ENCODE measurements at regions of chr6 and their contacts with region 1.

Region 1: DNA sequence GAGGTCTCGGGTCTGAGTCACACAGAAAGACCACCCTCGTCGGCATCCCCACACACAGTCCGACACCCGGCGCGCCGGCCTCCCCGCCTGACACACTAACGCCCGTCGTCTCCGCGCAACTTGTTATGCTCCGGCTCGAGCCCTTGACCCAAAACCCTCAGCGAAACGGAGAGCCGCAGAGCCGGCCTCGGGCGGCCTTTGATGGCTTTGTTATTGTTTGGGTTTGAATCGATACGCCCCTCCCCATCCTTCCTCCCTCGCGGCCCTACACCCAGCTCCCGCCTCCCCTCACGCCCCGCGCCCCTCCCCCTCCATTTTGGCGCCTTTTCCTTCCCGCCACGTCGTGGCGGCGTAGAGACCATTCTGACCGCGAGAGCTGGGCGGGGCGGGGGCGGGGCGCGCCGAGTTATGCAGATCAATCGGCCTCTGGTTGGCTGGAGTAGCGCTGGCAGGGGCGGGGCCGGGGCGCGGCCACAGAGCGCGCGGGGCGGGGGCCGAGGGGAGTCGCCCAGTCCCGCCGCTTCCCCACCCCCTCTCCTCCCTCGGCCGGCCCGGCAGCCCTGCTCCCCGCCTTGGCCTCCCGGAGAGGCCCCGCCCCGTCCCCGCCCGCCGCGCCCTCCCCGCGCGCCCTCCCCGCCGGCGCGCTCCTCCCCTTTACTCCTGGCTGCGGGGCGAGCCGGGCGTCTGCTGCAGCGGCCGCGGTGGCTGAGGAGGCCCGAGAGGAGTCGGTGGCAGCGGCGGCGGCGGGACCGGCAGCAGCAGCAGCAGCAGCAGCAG is at the start of gene PIM1:
- DNase-seq: peak; percentile 99 to 100 (median 100)
- ATAC-seq: peak; percentile 90 to 96 (median 92)
- H3K4me3 ChIP-seq: peak within 1 kb of the TSS; percentile 61 to 100 (median 90)
- H3K27ac ChIP-seq: peak within 1 kb of the TSS; percentile 88 to 97 (median 93)
- H3K4me1 ChIP-seq: peaks cover 0 to 42% (median 17%) of the 10 kb centered on the region in 12 donors
- H3K27me3 ChIP-seq: no peaks in the 10 kb centered on the region
- CTCF ChIP-seq: peak in 1 of 12 donors; percentile 25
- POLR2A ChIP-seq: peak; percentile 68 to 95
- total RNA-seq, gene PIM1: 7.0 to 81.8 (median 16.0) TPM

Region 2: GRCh38 chr6:36885461-36886401 is 284.0 kb before region 1 on chr6 and contains the start of gene C6orf89:
- intact Hi-C with region 1: loop called in 5 of 10 experiments (anchors 5 to 10 kb)
- DNase-seq: peak; percentile 97 to 99 (median 98)
- ATAC-seq: peak; percentile 99 to 100 (median 100)
- H3K4me3 ChIP-seq: peak within 1 kb of the TSS; percentile 52 to 93 (median 83)
- H3K27ac ChIP-seq: peak within 1 kb of the TSS; percentile 77 to 95 (median 88)
- H3K4me1 ChIP-seq: peaks cover 0 to 42% (median 26%) of the 10 kb centered on the region in 12 donors
- H3K27me3 ChIP-seq: no peaks in the 10 kb centered on the region
- CTCF ChIP-seq: peak; percentile 73 to 94 (median 87)
- POLR2A ChIP-seq: peak in 1 of 2 donors; percentile 75
- total RNA-seq, gene C6orf89: 54.2 to 86.2 (median 75.5) TPM

Region 3: DNA sequence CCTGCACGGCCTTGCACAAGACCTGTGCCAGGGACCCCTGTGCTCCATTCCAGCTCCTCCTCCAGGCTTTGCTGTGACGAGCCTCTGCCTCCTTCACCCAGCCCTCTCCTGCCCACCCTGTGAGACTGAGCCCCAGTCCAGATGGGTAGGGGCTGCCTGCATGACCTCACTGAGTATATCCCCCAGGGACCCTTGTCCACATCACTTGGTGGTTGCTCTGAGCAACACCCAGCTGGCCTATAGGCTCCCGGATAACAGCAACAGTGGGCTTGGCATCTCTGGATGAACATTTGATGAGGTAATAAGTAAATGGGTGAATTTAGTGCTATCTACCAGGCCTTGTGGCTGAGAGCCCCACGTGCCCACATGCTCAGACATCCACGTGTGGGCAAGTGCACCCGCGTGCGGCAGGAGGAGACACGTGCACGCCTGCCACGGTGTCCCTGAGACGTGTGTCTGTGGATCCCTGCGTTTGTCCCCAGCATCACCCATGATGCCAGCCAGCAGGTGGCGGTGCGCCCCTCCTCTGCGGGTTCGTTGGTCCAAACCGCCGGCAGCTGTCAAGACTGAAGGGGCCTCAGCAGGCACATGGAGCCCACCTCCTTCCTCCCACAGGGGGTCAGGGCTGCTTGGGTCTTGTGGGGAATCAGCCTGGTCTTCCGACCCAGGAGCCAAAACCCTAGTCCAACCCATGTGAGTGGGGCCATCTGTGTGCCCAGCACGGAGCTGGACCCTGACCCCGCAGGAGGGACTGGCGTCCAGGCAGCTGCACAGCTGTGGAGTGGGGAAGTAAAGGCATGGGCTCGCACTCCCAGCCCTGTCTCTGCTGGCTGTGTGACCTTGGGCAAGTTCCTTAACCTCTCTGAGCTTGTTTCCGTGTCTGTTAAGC is 118.3 kb before region 1 on chr6:
- intact Hi-C with region 1: loop called (anchors 1 to 2 kb)
- DNase-seq: peak; percentile 89 to 95 (median 90)
- ATAC-seq: peak; percentile 41 to 86 (median 81)
- H3K4me3 ChIP-seq: peak overlapping the region in 1 of 12 donors; percentile 36
- H3K27ac ChIP-seq: peak overlapping the region in 2 of 12 donors; percentile 32 to 93
- H3K4me1 ChIP-seq: peaks cover 0 to 55% (median 14%) of the 10 kb centered on the region in 12 donors
- H3K27me3 ChIP-seq: no peaks in the 10 kb centered on the region
- CTCF ChIP-seq: peak; percentile 82 to 96 (median 90)
- POLR2A ChIP-seq: no peak

Region 4: GRCh38 chr6:37131104-37131959 is 38.4 kb before region 1 on chr6:
- intact Hi-C with region 1: loop called in 6 of 10 experiments (anchors 1 to 5 kb)
- DNase-seq: peak; percentile 75 to 94 (median 82)
- ATAC-seq: peak; percentile 78 to 92 (median 88)
- H3K4me3 ChIP-seq: peak overlapping the region in 1 of 12 donors; percentile 19
- H3K27ac ChIP-seq: peak overlapping the region; percentile 48 to 93 (median 78)
- H3K4me1 ChIP-seq: peaks cover 0 to 45% (median 22%) of the 10 kb centered on the region in 12 donors
- H3K27me3 ChIP-seq: no peaks in the 10 kb centered on the region
- CTCF ChIP-seq: no peak
- POLR2A ChIP-seq: no peak

Region 5: GRCh38 chr6:37207903-37208456 is 38.3 kb after region 1 on chr6:
- intact Hi-C with region 1: loop called in 5 of 10 experiments (anchors 2 to 5 kb)
- DNase-seq: peak; percentile 64 to 91 (median 80)
- ATAC-seq: peak in 3 of 4 donors; percentile 70 to 82 (median 70)
- H3K4me3 ChIP-seq: no peak overlapping the region
- H3K27ac ChIP-seq: peak overlapping the region in 1 of 12 donors; percentile 51
- H3K4me1 ChIP-seq: peaks cover 0 to 56% (median 0%) of the 10 kb centered on the region in 12 donors
- H3K27me3 ChIP-seq: no peaks in the 10 kb centered on the region
- CTCF ChIP-seq: peak; percentile 47 to 77 (median 60)
- POLR2A ChIP-seq: no peak

Region 6: GRCh38 chr6:37791156-37791919 is 621.7 kb after region 1 on chr6:
- intact Hi-C with region 1: no loop called
- DNase-seq: peak; percentile 91 to 95 (median 94)
- ATAC-seq: peak; percentile 97 to 99 (median 99)
- H3K4me3 ChIP-seq: no peak overlapping the region
- H3K27ac ChIP-seq: no peak overlapping the region
- H3K4me1 ChIP-seq: peaks cover 0 to 20% (median 9%) of the 10 kb centered on the region in 12 donors
- H3K27me3 ChIP-seq: no peaks in the 10 kb centered on the region
- CTCF ChIP-seq: peak; percentile 91 to 98 (median 94)
- POLR2A ChIP-seq: no peak

Region 7: GRCh38 chr6:37838219-37838921 is 668.7 kb after region 1 on chr6:
- intact Hi-C with region 1: no loop called
- DNase-seq: no peak
- ATAC-seq: no peak
- H3K4me3 ChIP-seq: no peak overlapping the region
- H3K27ac ChIP-seq: no peak overlapping the region
- H3K4me1 ChIP-seq: peaks cover 0 to 52% (median 4%) of the 10 kb centered on the region in 12 donors
- H3K27me3 ChIP-seq: no peaks in the 10 kb centered on the region
- CTCF ChIP-seq: no peak
- POLR2A ChIP-seq: no peak

Measured in heart left ventricle (tissue), 16 donors.